Caco-2 (cell line): ENCODE measurements at regions of chr1 and their contacts with region 1.

Region 1: DNA sequence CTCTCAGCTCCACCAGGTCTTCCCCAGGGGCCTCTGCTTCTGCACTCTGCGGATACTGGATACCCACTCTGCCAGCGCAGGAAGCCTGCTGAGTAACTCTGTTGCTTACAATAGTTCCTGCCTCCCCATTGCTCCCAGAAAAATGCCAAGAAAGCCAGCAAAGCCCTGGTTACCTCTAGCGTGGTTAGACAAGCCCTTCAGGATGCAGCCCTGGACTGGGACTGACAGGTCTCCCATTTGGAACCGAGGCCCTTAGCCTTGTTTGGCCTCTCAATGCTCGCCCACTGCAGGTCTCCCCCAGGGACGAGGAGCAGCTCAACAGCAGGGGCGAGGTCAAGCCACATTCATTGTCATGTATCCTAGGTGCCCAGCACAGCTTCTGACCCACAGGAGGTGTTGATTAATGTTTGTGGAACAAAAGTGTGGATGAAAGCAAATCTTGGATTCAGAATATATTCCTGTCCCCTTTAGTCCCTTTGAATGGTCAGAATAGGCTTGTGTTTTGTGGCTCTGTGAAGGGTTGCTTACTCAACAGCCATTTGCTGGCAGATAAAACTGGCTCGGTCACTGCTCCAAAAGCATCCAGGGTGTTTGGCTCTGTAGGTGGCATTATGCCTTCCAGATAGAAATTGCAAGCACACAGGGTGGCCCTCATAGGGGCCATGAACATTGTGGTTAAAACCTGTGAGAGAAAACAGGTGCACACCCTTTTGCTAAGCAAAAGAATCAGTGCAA is 58.9 kb downstream of the C1orf198 start:
- DNase-seq: no peak
- H3K4me3 ChIP-seq: no peak overlapping the region
- H3K4me3 Mint-ChIP-seq: no peak overlapping the region
- H3K27ac Mint-ChIP-seq: no peak overlapping the region
- H3K4me1 ChIP-seq: 0 out of 2 replicates have a peak, but pooled peaks cover 3% of the 10 kb centered on the region
- H3K4me1 Mint-ChIP-seq: no peaks in the 10 kb centered on the region
- H3K27me3 ChIP-seq: no peaks in the 10 kb centered on the region
- H3K27me3 Mint-ChIP-seq: no peaks in the 10 kb centered on the region
- CTCF ChIP-seq: no peak

Region 2: GRCh38 chr1:230768903-230769838 is 40.3 kb before region 1 on chr1:
- CTCF ChIA-PET with region 1: no interaction called
- POLR2A ChIA-PET with region 1: no interaction called
- intact Hi-C with region 1: no loop called
- DNase-seq: peak in 1 of 2 experiments; percentile 40
- H3K4me3 ChIP-seq: no peak overlapping the region
- H3K4me3 Mint-ChIP-seq: no peak overlapping the region
- H3K27ac Mint-ChIP-seq: no peak overlapping the region
- H3K4me1 ChIP-seq: peaks cover 13% of the 10 kb centered on the region
- H3K4me1 Mint-ChIP-seq: peaks cover 7% of the 10 kb centered on the region
- H3K27me3 ChIP-seq: no peaks in the 10 kb centered on the region
- H3K27me3 Mint-ChIP-seq: no peaks in the 10 kb centered on the region
- CTCF ChIP-seq: no peak

Region 3: GRCh38 chr1:230849451-230850224 is 40.2 kb after region 1 on chr1:
- CTCF ChIA-PET with region 1: no interaction called
- POLR2A ChIA-PET with region 1: interaction called, 10 read pairs
- intact Hi-C with region 1: no loop called
- DNase-seq: no peak
- H3K4me3 ChIP-seq: no peak overlapping the region
- H3K4me3 Mint-ChIP-seq: no peak overlapping the region
- H3K27ac Mint-ChIP-seq: peak overlapping the region; percentile 40
- H3K4me1 ChIP-seq: peaks cover 24% of the 10 kb centered on the region
- H3K4me1 Mint-ChIP-seq: peaks cover 21% of the 10 kb centered on the region
- H3K27me3 ChIP-seq: no peaks in the 10 kb centered on the region
- H3K27me3 Mint-ChIP-seq: no peaks in the 10 kb centered on the region
- CTCF ChIP-seq: no peak

Region 4: GRCh38 chr1:230940848-230941247 is 131.4 kb after region 1 on chr1:
- CTCF ChIA-PET with region 1: no interaction called
- POLR2A ChIA-PET with region 1: no interaction called
- intact Hi-C with region 1: no loop called
- DNase-seq: no peak
- H3K4me3 ChIP-seq: no peak overlapping the region
- H3K4me3 Mint-ChIP-seq: no peak overlapping the region
- H3K27ac Mint-ChIP-seq: no peak overlapping the region
- H3K4me1 ChIP-seq: peaks cover 50% of the 10 kb centered on the region
- H3K4me1 Mint-ChIP-seq: peaks cover 23% of the 10 kb centered on the region
- H3K27me3 ChIP-seq: no peaks in the 10 kb centered on the region
- H3K27me3 Mint-ChIP-seq: no peaks in the 10 kb centered on the region
- CTCF ChIP-seq: no peak